ENCODE measurements at regions of chr17 and their contacts with region 1.

Region 1: DNA sequence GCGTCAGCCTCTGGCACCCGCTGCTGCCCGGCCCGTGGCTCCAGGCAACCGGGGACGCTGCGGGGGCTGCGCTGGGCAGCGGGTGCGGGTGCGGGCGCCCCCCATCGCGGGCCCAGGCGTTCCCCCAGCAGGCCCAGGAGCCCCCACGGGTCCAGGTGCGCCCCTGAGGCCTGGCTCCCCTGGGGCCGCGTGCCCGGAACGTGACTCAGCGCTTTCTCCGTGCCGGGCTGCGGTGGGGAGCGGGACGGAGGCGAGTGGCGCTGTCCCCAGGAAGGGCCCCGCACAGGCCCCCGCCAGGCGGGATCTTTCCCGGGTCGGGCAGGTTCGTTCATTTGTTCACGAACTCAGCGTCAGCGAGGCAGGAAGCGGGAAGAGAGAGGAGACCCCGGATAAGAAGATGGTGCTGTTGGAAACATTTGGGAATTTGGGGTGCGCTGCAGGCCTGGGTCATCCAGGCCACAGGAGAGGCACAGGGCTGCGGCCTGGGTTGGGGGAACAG is 18.4 kb upstream of the EXOC7 start:
- DNase-seq: no peak
- H3K4me3 Mint-ChIP-seq: no peak overlapping the region
- H3K27ac Mint-ChIP-seq: peak overlapping the region; percentile 60
- H3K4me1 Mint-ChIP-seq: peaks cover 20% of the 10 kb centered on the region
- H3K27me3 Mint-ChIP-seq: no peaks in the 10 kb centered on the region

Region 2: GRCh38 chr17:76036497-76037261 is 85.3 kb before region 1 on chr17:
- CTCF ChIA-PET with region 1: no interaction called
- POLR2A ChIA-PET with region 1: no interaction called
- DNase-seq: no peak
- H3K4me3 Mint-ChIP-seq: no peak overlapping the region
- H3K27ac Mint-ChIP-seq: no peak overlapping the region
- H3K4me1 Mint-ChIP-seq: no peaks in the 10 kb centered on the region
- H3K27me3 Mint-ChIP-seq: no peaks in the 10 kb centered on the region

Region 3: GRCh38 chr17:76103274-76104139 is 18.5 kb before region 1 on chr17 and contains the start of gene EXOC7:
- CTCF ChIA-PET with region 1: interaction called, 6 read pairs
- POLR2A ChIA-PET with region 1: interaction called, 10 read pairs
- DNase-seq: peak; percentile 94
- H3K4me3 Mint-ChIP-seq: peak within 1 kb of the TSS; percentile 95
- H3K27ac Mint-ChIP-seq: peak within 1 kb of the TSS; percentile 92
- H3K4me1 Mint-ChIP-seq: peaks cover 30% of the 10 kb centered on the region
- H3K27me3 Mint-ChIP-seq: no peaks in the 10 kb centered on the region
- total RNA-seq, gene EXOC7: 119 to 120 TPM

Region 4: DNA sequence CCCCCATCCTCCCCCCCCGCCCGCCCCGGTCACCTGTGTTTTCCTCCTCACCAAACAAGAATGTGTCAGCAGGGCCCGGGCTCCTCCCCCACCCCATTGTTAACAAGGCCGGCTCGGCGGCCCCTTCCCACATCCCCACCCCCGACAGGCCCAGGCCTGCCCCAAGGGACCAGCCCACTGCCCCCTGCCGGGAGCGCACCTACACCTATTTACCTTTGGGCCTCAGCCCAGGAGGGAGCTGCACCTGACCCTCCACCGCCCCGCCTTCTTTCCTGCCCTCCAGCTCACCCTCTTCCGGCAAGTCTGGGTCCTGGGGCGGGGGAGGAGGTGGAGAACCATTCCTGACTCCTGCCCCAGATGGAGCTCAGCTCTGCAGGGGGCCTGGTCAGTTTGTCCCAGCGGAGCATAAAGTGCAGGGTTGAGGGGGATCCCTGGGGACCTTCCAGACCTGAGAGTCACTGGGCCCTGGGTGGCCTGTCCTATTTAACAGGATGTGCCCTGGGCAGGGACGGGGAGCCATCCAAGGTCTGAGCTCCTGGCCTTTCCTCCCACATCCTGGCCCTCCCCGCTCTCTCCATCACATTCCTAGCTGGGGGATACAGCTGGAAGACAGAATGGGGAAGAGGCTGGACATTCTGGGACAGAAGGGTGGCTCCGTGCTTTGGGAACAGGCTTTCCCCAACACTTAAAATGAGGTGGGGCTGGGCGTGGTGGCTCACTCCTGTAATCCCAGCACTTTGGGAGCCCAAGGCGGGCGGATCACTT is 10.8 kb after region 1 on chr17:
- CTCF ChIA-PET with region 1: interaction called, 16 read pairs
- POLR2A ChIA-PET with region 1: interaction called, 6 read pairs
- DNase-seq: no peak
- H3K4me3 Mint-ChIP-seq: no peak overlapping the region
- H3K27ac Mint-ChIP-seq: no peak overlapping the region
- H3K4me1 Mint-ChIP-seq: peaks cover 13% of the 10 kb centered on the region
- H3K27me3 Mint-ChIP-seq: no peaks in the 10 kb centered on the region

Region 5: DNA sequence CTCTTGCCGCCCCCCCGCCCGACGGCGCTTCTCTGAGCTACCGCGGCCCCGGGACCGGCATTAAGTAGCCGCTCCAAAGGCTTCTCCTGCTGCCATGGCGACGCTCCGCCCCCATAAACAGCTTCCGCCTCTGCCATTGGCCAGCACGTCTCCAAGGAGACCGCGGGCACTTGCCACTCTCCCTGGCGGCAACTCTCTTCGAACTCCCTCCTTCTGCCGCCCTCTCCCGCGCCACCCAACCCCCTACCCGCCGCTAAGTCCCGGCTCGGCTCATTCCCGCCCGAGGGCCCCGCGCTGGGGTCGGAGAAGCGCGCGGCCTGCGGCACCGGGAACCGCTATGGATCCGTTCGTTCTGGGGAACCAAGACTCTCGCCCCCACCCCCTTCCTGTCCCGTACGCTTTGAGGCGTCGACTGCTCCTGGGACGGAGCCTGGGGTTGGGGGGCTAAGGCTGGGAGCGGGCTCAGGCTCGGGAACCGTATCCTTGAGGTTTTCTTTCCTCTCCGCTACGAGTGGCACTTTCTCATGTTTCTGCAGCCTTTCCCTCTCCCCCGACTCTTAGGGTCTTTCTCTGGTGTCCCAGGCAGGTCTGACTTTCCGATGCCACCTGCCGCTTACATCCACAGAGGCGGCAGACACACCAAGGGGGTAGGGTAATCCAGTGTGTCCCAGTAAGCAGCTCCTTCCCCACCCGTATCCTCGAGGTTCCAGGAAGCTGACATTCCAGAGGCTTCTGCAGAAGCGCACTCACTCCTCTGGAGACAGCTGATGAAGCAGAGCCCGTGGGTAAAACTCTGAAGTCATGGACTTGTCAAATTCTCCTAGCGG is 19.4 kb after region 1 on chr17 and contains the start of gene FOXJ1:
- CTCF ChIA-PET with region 1: interaction called, 14 read pairs
- POLR2A ChIA-PET with region 1: interaction called, 8 read pairs
- DNase-seq: peak; percentile 94
- H3K4me3 Mint-ChIP-seq: peak within 1 kb of the TSS; percentile 71
- H3K27ac Mint-ChIP-seq: peak within 1 kb of the TSS; percentile 91
- H3K4me1 Mint-ChIP-seq: peaks cover 60% of the 10 kb centered on the region
- H3K27me3 Mint-ChIP-seq: peaks cover 14% of the 10 kb centered on the region
- total RNA-seq, gene FOXJ1: 0.13 to 0.15 TPM

Region 6: GRCh38 chr17:76296186-76296585 is 174.2 kb after region 1 on chr17:
- CTCF ChIA-PET with region 1: interaction called, 17 read pairs
- POLR2A ChIA-PET with region 1: no interaction called
- DNase-seq: no peak
- H3K4me3 Mint-ChIP-seq: no peak overlapping the region
- H3K27ac Mint-ChIP-seq: no peak overlapping the region
- H3K4me1 Mint-ChIP-seq: peaks cover 3% of the 10 kb centered on the region
- H3K27me3 Mint-ChIP-seq: no peaks in the 10 kb centered on the region